ENCODE measurements at regions of chr6 and their contacts with region 1.

Region 1: GRCh38 chr6:4135665-4136353 is 434 bp upstream of the ECI2 start:
- DNase-seq: peak; percentile 74 to 93 (median 86)
- ATAC-seq: peak; percentile 97
- H3K4me3 ChIP-seq: peak overlapping the region; percentile 67
- H3K4me3 Mint-ChIP-seq: peak overlapping the region; percentile 83 to 94 (median 87)
- H3K27ac ChIP-seq: peak overlapping the region; percentile 76
- H3K27ac Mint-ChIP-seq: peak overlapping the region; percentile 55 to 88 (median 84)
- H3K4me1 ChIP-seq: peaks cover 10 to 14% of the 10 kb centered on the region in 2 donors
- H3K4me1 Mint-ChIP-seq: peaks cover 20 to 52% (median 37%) of the 10 kb centered on the region in 7 donors
- H3K27me3 ChIP-seq: no peaks in the 10 kb centered on the region
- H3K27me3 Mint-ChIP-seq: no peaks in the 10 kb centered on the region

Region 2: DNA sequence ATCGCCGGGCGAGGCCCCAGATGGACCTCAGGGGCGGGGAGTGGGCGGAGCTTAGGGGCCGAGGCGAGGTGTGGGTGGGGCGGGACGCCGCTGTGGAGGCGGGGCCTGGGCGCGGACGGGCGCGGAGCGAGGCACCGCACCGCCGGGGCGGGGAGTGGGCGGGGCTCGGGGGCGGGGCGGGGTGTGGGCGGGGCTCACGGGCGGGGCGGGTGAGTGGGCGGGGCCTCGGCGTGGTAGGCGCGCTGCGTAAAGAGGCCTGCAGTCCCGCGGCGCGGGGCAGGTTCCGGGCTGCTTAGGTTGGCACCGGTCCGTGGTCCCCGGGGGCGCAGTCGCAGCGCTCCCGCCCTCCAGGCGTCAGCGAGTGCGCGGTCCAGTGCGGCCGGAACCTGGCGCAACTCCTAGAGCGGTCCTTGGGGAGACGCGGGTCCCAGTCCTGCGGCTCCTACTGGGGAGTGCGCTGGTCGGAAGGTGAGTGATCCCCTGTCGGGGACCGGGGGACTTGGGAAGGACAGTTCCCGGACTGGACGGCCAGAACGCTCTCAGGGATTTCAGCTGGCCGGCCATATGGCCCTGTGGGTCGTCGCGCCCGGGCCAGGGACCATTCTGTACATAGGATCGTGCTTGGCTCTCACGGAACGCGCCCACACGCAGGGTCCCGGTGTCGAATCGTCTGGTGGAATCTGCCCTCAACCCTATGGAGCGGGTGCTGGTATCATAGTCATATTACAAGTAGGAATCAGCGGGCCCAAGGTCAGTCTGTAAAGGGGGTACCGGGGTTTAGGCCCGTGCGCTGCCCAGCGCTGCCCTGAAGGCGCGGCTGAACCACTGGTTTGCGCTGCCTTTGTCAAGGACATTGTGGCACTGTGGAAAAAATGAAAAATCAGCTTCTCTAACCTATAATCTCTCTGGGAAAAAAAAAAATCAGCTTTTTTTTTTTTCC is 1135.9 kb before region 1 on chr6 and contains the start of gene NQO2:
- CTCF ChIA-PET with region 1: no interaction called
- POLR2A ChIA-PET with region 1: no interaction called
- intact Hi-C with region 1: loop called in 1 of 2 experiments (anchors 1 kb)
- DNase-seq: peak; percentile 68 to 92 (median 81)
- ATAC-seq: peak; percentile 91
- H3K4me3 ChIP-seq: peak within 1 kb of the TSS; percentile 95
- H3K4me3 Mint-ChIP-seq: peak within 1 kb of the TSS; percentile 83 to 95 (median 90)
- H3K27ac ChIP-seq: peak within 1 kb of the TSS; percentile 88
- H3K27ac Mint-ChIP-seq: peak within 1 kb of the TSS; percentile 78 to 96 (median 88)
- H3K4me1 ChIP-seq: peaks cover 5 to 18% of the 10 kb centered on the region in 2 donors
- H3K4me1 Mint-ChIP-seq: peaks cover 11 to 35% (median 26%) of the 10 kb centered on the region in 7 donors
- H3K27me3 ChIP-seq: no peaks in the 10 kb centered on the region
- H3K27me3 Mint-ChIP-seq: peaks cover 0 to 5% (median 0%) of the 10 kb centered on the region in 5 donors
- total RNA-seq, gene NQO2: 8.1 to 34.6 (median 22.6) TPM

Region 3: GRCh38 chr6:3356056-3356761 is 779.6 kb before region 1 on chr6:
- CTCF ChIA-PET with region 1: no interaction called
- POLR2A ChIA-PET with region 1: no interaction called
- intact Hi-C with region 1: loop called in 1 of 2 experiments (anchors 1 kb)
- DNase-seq: peak in 8 of 9 donors; percentile 31 to 86 (median 78)
- ATAC-seq: peak; percentile 89
- H3K4me3 ChIP-seq: peak overlapping the region; percentile 65
- H3K4me3 Mint-ChIP-seq: peak overlapping the region; percentile 76 to 99 (median 88)
- H3K27ac ChIP-seq: peak overlapping the region; percentile 78
- H3K27ac Mint-ChIP-seq: peak overlapping the region in 8 of 9 donors; percentile 92 to 100 (median 98)
- H3K4me1 ChIP-seq: peaks cover 7 to 27% of the 10 kb centered on the region in 2 donors
- H3K4me1 Mint-ChIP-seq: peaks cover 14 to 79% (median 58%) of the 10 kb centered on the region in 7 donors
- H3K27me3 ChIP-seq: no peaks in the 10 kb centered on the region
- H3K27me3 Mint-ChIP-seq: peaks cover 0 to 43% (median 0%) of the 10 kb centered on the region in 5 donors

Region 4: GRCh38 chr6:3848925-3849605 is 286.7 kb before region 1 on chr6 and contains the start of gene FAM50B:
- CTCF ChIA-PET with region 1: interaction called, 3 read pairs
- POLR2A ChIA-PET with region 1: interaction called, 3 read pairs
- intact Hi-C with region 1: loop called (anchors 1 to 2 kb)
- DNase-seq: peak; percentile 84 to 92 (median 90)
- ATAC-seq: peak; percentile 99
- H3K4me3 ChIP-seq: peak within 1 kb of the TSS; percentile 72
- H3K4me3 Mint-ChIP-seq: peak within 1 kb of the TSS; percentile 68 to 89 (median 80)
- H3K27ac ChIP-seq: peak within 1 kb of the TSS; percentile 59
- H3K27ac Mint-ChIP-seq: peak within 1 kb of the TSS; percentile 27 to 95 (median 78)
- H3K4me1 ChIP-seq: peaks cover 0 to 6% of the 10 kb centered on the region in 2 donors
- H3K4me1 Mint-ChIP-seq: peaks cover 0 to 26% (median 16%) of the 10 kb centered on the region in 7 donors
- H3K27me3 ChIP-seq: no peaks in the 10 kb centered on the region
- H3K27me3 Mint-ChIP-seq: peaks cover 0 to 3% (median 0%) of the 10 kb centered on the region in 5 donors
- total RNA-seq, gene FAM50B: 3.4 to 14.1 (median 12.0) TPM

Region 5: DNA sequence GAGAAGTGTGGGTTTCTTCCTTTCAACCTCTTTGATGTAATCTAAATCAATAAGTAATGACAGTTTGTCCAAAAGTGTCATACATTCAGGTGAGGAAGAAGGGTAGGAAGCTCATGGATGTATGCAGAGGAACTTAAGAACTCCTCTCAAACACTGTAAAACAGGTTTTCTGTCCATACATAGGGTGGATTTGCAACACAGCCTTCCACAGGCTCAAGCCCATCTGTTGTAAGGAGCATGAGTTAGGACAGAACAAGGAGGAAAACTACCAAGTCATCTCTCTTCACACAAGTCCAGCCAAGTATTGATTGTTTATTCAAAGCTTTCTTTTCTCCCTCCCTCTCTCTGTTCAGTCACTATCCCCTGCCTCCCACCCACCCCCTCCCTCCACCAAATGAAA is 591.4 kb after region 1 on chr6:
- CTCF ChIA-PET with region 1: no interaction called
- POLR2A ChIA-PET with region 1: no interaction called
- intact Hi-C with region 1: no loop called
- DNase-seq: no peak
- ATAC-seq: no peak
- H3K4me3 ChIP-seq: no peak overlapping the region
- H3K4me3 Mint-ChIP-seq: no peak overlapping the region
- H3K27ac ChIP-seq: no peak overlapping the region
- H3K27ac Mint-ChIP-seq: no peak overlapping the region
- H3K4me1 ChIP-seq: no peaks in the 10 kb centered on the region
- H3K4me1 Mint-ChIP-seq: peaks cover 0 to 11% (median 3%) of the 10 kb centered on the region in 7 donors
- H3K27me3 ChIP-seq: no peaks in the 10 kb centered on the region
- H3K27me3 Mint-ChIP-seq: peaks cover 4 to 26% (median 17%) of the 10 kb centered on the region in 5 donors

Region 6: DNA sequence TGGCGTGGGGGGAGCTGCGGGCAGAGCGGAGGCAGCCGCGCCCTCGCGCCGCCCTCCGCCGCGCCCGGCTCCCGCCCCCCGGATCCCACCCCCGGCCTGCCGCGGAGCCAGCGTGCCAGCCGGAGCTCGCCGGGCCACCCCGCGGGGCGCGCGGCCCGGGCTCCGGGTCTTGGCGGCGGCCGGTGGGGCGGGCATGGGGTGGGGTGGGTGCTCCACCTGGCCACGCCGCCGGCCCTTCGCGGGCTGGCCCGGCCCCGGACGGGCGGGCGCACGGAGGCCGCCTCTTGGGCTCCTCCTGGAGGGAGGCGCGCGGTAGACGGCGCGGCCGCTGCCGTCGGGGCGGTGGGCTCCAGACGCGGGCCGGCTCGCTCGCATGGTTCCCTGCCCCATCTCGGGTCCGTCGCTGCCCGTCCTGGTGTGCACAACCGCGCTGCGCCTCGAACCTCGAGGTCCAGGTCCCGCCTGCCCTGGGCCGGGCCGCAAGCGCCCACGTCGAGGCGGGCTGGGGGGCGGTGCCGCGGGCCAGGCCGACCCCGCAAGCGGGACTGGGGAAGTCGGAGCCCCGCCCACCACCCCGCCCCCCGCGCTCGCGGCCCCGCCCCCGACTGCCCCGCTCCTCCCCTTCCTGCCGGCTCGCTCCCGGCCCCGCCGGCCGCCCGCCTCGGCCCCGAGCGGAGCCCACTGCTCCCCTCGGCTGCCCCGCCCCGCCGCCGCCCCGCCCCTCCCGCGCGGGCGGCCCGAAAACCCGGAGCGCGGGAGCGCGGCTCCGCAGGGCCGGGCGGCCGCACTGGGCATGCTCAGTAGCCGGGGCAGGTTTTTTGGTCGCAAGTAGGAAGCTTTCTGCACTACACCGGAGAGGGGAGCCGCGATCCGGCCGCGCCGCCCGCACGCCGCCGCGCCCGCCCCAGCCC is 640.0 kb after region 1 on chr6 and contains the start of gene CDYL:
- CTCF ChIA-PET with region 1: no interaction called
- POLR2A ChIA-PET with region 1: no interaction called
- intact Hi-C with region 1: loop called (anchors 1 to 5 kb)
- DNase-seq: peak; percentile 75 to 94 (median 88)
- ATAC-seq: peak; percentile 89
- H3K4me3 ChIP-seq: peak within 1 kb of the TSS; percentile 58
- H3K4me3 Mint-ChIP-seq: peak within 1 kb of the TSS; percentile 84 to 96 (median 93)
- H3K27ac ChIP-seq: peak within 1 kb of the TSS; percentile 63
- H3K27ac Mint-ChIP-seq: peak within 1 kb of the TSS; percentile 61 to 94 (median 87)
- H3K4me1 ChIP-seq: peaks cover 0 to 10% of the 10 kb centered on the region in 2 donors
- H3K4me1 Mint-ChIP-seq: peaks cover 32 to 48% (median 46%) of the 10 kb centered on the region in 7 donors
- H3K27me3 ChIP-seq: no peaks in the 10 kb centered on the region
- H3K27me3 Mint-ChIP-seq: peaks cover 0 to 38% (median 0%) of the 10 kb centered on the region in 5 donors
- total RNA-seq, gene CDYL: 25.5 to 43.3 (median 35.1) TPM

Measured in naive thymus-derived CD4-positive, alpha-beta T cell (primary cell).